H1 (cell line): ENCODE measurements at regions of chr7 and their contacts with region 1.

Region 1: GRCh38 chr7:105769901-105770628 is 106.3 kb downstream of the ATXN7L1 start:
- DNase-seq: no peak
- H3K4me3 ChIP-seq: no peak overlapping the region
- H3K27ac ChIP-seq: no peak overlapping the region
- H3K4me1 ChIP-seq: peaks cover 11 to 23% (median 19%) of the 10 kb centered on the region in 4 experiments
- H3K27me3 ChIP-seq: no peaks in the 10 kb centered on the region
- CTCF ChIP-seq: no peak
- EP300 ChIP-seq: no peak
- POLR2A ChIP-seq: no peak
- RAD21 ChIP-seq: no peak

Region 2: GRCh38 chr7:105512415-105512814 is 257.6 kb before region 1 on chr7:
- CTCF ChIA-PET with region 1: no interaction called
- POLR2A ChIA-PET with region 1: no interaction called
- DNase-seq: no peak
- H3K4me3 ChIP-seq: no peak overlapping the region
- H3K27ac ChIP-seq: no peak overlapping the region
- H3K4me1 ChIP-seq: no peaks in the 10 kb centered on the region
- H3K27me3 ChIP-seq: no peaks in the 10 kb centered on the region
- CTCF ChIP-seq: no peak
- EP300 ChIP-seq: no peak
- POLR2A ChIP-seq: no peak
- RAD21 ChIP-seq: no peak

Region 3: GRCh38 chr7:105621617-105622016 is 148.4 kb before region 1 on chr7:
- CTCF ChIA-PET with region 1: no interaction called
- POLR2A ChIA-PET with region 1: no interaction called
- DNase-seq: no peak
- H3K4me3 ChIP-seq: no peak overlapping the region
- H3K27ac ChIP-seq: no peak overlapping the region
- H3K4me1 ChIP-seq: no peaks in the 10 kb centered on the region
- H3K27me3 ChIP-seq: no peaks in the 10 kb centered on the region
- CTCF ChIP-seq: no peak
- EP300 ChIP-seq: no peak
- POLR2A ChIP-seq: no peak
- RAD21 ChIP-seq: no peak

Region 4: GRCh38 chr7:105664816-105665525 is 105.1 kb before region 1 on chr7:
- CTCF ChIA-PET with region 1: interaction called, 12 read pairs
- POLR2A ChIA-PET with region 1: no interaction called
- DNase-seq: no peak
- H3K4me3 ChIP-seq: no peak overlapping the region
- H3K27ac ChIP-seq: peak overlapping the region; percentile 29; the same call in 1 of the 2 replicates
- H3K4me1 ChIP-seq: peaks cover 10 to 16% (median 13%) of the 10 kb centered on the region in 4 experiments
- H3K27me3 ChIP-seq: no peaks in the 10 kb centered on the region
- CTCF ChIP-seq: no peak
- EP300 ChIP-seq: peak in 1 of 2 experiments; percentile 85; a peak in 2 of 3 replicates
- POLR2A ChIP-seq: no peak
- RAD21 ChIP-seq: peak in 1 of 2 experiments; percentile 5; a peak in 1 of 4 replicates

Region 5: GRCh38 chr7:105721327-105722104 is 48.5 kb before region 1 on chr7:
- CTCF ChIA-PET with region 1: interaction called, 10 read pairs
- POLR2A ChIA-PET with region 1: no interaction called
- DNase-seq: peak in 1 of 2 experiments; percentile 19
- H3K4me3 ChIP-seq: no peak overlapping the region
- H3K27ac ChIP-seq: no peak overlapping the region
- H3K4me1 ChIP-seq: peaks cover 15 to 22% (median 17%) of the 10 kb centered on the region in 4 experiments
- H3K27me3 ChIP-seq: no peaks in the 10 kb centered on the region
- CTCF ChIP-seq: no peak
- EP300 ChIP-seq: no peak; a peak in 1 of 3 replicates
- POLR2A ChIP-seq: no peak
- RAD21 ChIP-seq: peak in 1 of 2 experiments; percentile 21; a peak in 1 of 4 replicates

Region 6: DNA sequence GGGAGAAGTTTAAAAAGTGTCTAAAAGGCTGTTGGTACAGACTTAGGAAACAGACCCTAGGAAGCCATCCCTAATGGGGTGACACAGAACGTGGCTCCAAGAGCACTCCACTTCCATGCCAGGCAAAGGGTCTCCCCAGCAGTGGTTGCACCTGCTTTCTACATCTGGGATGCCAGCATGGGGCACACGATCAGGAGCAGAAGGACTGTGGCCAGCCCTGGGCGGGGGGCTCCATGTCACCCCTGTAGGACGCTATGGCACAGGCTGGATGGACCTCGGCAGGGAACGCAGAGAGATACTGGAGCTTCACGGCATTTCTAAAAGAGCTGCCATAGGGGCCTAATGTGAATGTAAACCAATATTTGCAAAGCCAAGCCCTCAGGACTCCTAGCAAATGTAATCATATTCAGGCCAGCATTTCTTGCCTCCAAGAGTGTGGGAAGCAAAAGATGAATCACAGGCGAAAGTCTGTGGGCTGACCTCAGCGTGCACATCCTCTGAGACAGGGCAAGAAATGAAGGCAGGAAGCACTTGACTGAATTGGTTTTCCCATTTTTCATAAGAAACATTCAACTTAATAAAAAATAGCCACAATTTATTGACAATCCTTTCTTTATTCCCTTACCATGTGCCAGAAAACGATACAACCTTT is 12.5 kb after region 1 on chr7:
- CTCF ChIA-PET with region 1: interaction called, 28 read pairs
- POLR2A ChIA-PET with region 1: interaction called, 4 read pairs
- DNase-seq: no peak
- H3K4me3 ChIP-seq: no peak overlapping the region
- H3K27ac ChIP-seq: no peak overlapping the region
- H3K4me1 ChIP-seq: peaks cover 0 to under 1% (median 0%) of the 10 kb centered on the region in 4 experiments; a peak in 2 of 7 replicates
- H3K27me3 ChIP-seq: no peaks in the 10 kb centered on the region
- CTCF ChIP-seq: no peak
- EP300 ChIP-seq: no peak
- POLR2A ChIP-seq: no peak
- RAD21 ChIP-seq: no peak

Region 7: GRCh38 chr7:105826143-105826542 is 56.1 kb after region 1 on chr7:
- CTCF ChIA-PET with region 1: interaction called, 10 read pairs
- POLR2A ChIA-PET with region 1: no interaction called
- DNase-seq: no peak
- H3K4me3 ChIP-seq: no peak overlapping the region
- H3K27ac ChIP-seq: no peak overlapping the region
- H3K4me1 ChIP-seq: peaks cover 0 to 12% (median under 1%) of the 10 kb centered on the region in 4 experiments; a peak in 1 of 7 replicates
- H3K27me3 ChIP-seq: no peaks in the 10 kb centered on the region
- CTCF ChIP-seq: no peak
- EP300 ChIP-seq: no peak
- POLR2A ChIP-seq: no peak
- RAD21 ChIP-seq: no peak

Region 8: GRCh38 chr7:105849122-105849855 is 79.2 kb after region 1 on chr7:
- CTCF ChIA-PET with region 1: interaction called, 13 read pairs
- POLR2A ChIA-PET with region 1: no interaction called
- DNase-seq: peak in 1 of 2 experiments; percentile 80
- H3K4me3 ChIP-seq: 0 out of 8 replicates have a peak overlapping the region, but pooled peaks of 1 of the 4 experiments have one; percentile 12
- H3K27ac ChIP-seq: no peak overlapping the region
- H3K4me1 ChIP-seq: peaks cover 15 to 28% (median 19%) of the 10 kb centered on the region in 4 experiments
- H3K27me3 ChIP-seq: no peaks in the 10 kb centered on the region
- CTCF ChIP-seq: no peak
- EP300 ChIP-seq: peak in 1 of 2 experiments; percentile 67; a peak in 1 of 3 replicates
- POLR2A ChIP-seq: 0 out of 3 replicates have a peak, but pooled peaks of 1 of the 2 experiments have one; percentile 38
- RAD21 ChIP-seq: peak; percentile 3 to 8; a peak in 2 of 4 replicates

Region 9: DNA sequence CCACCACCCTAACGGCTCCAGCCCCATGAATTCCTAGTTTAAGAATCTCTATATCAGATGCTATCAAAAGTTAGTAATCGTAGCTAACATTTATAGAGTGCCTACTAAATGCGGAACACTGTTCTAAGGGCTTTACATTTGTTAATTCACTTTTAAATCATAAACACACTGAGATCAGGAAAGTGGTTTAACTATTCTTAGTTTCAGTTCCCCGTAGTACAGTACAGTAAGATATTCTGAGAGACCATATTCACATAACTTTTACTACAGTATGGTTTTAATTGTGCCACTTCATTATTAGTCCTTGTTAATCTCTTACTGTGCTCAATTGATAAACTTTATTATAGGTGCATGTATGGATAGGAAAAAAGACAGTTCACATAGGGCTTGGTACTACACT is 319.6 kb after region 1 on chr7:
- CTCF ChIA-PET with region 1: no interaction called
- POLR2A ChIA-PET with region 1: no interaction called
- DNase-seq: no peak
- H3K4me3 ChIP-seq: no peak overlapping the region
- H3K27ac ChIP-seq: no peak overlapping the region
- H3K4me1 ChIP-seq: no peaks in the 10 kb centered on the region
- H3K27me3 ChIP-seq: no peaks in the 10 kb centered on the region
- CTCF ChIP-seq: no peak
- EP300 ChIP-seq: no peak
- POLR2A ChIP-seq: no peak
- RAD21 ChIP-seq: no peak

Region 10: GRCh38 chr7:106448992-106449859 is 679.2 kb after region 1 on chr7:
- CTCF ChIA-PET with region 1: no interaction called
- POLR2A ChIA-PET with region 1: no interaction called
- DNase-seq: no peak
- H3K4me3 ChIP-seq: no peak overlapping the region
- H3K27ac ChIP-seq: no peak overlapping the region
- H3K4me1 ChIP-seq: no peaks in the 10 kb centered on the region
- H3K27me3 ChIP-seq: no peaks in the 10 kb centered on the region
- CTCF ChIP-seq: no peak
- EP300 ChIP-seq: no peak
- POLR2A ChIP-seq: no peak
- RAD21 ChIP-seq: no peak